Sciatic nerve (tissue), 2 donors: ENCODE measurements at regions of chr17 and their contacts with region 1.

Region 1: GRCh38 chr17:82767041-82767754 is 15.3 kb downstream of the TBCD start:
- DNase-seq: no peak
- ATAC-seq: peak; percentile 49

Region 2: DNA sequence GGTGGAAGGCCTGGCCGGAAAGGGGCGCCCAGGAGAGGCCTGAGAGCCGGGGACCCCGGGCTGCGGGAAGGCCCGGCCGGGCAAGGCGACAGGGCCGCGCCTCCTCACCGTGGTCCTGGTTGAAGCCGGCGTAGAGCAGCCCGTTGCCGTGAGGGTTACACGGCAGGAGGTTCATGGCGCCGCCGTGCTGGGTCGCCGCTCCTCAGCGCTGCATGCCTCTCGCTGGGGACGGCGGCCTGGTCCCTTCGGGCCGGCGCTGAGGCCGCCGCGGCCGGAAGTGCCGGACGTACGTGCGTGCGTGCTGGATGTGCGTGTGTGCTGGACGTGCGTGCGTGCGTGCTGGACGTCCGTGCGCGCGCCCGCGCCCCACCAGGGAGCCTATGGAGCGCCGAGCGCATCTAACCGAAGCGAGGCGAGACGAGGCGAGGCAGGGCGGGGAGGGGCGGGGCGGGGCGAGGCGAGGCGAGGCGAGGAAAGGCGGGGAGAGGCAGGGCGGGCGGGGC is 119.0 kb before region 1 on chr17 and contains the start of gene WDR45B:
- intact Hi-C with region 1: no loop called
- DNase-seq: peak; percentile 96
- ATAC-seq: peak; percentile 96
- total RNA-seq, gene WDR45B: 67.1 TPM

Region 3: GRCh38 chr17:82664701-82665182 is 102.5 kb before region 1 on chr17:
- intact Hi-C with region 1: loop called (anchors 5 kb)
- DNase-seq: no peak
- ATAC-seq: no peak

Region 4: GRCh38 chr17:82698065-82698973 is 68.9 kb before region 1 on chr17 and contains the start of gene RAB40B:
- intact Hi-C with region 1: no loop called
- DNase-seq: peak; percentile 99
- ATAC-seq: peak; percentile 99
- total RNA-seq, gene RAB40B: 30.3 TPM

Region 5: DNA sequence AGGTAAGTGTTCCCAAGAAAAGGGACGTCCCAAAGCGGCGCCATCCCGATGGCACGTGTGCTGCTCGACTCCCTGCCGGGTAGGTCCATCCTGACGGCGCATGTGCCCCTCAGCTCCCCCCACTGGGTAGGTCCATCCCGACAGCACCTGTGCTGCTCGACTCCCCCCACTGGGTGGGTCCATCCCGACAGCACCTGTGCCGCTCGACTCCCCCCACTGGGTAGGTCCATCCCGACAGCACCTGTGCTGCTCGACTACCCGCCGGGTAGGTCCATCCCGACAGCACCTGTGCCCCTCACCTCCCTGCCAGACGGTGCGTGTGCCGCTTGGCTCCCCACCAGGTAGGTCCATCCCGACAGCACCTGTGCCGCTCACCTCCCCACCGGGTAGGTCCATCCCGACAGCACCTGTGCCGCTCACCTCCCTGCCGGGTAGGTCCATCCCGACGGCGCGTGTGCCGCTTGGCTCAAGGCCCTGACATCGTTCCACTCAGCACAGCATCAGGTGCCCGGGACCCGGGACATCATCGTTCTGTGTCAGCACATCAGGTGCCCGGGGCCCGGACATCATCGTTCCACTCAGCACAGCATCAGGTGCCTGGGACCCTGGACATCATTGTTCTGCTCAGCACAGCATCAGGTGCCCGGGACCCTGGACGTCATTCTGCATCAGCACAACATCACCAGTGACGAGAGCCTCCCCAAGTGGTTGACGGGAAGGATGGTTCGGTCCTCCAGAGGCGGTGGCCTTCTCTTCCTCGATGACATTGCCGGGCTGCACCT is 37.5 kb before region 1 on chr17:
- intact Hi-C with region 1: no loop called
- DNase-seq: no peak
- ATAC-seq: peak; percentile 18

Region 6: GRCh38 chr17:82740906-82741759 is 26.1 kb before region 1 on chr17:
- intact Hi-C with region 1: no loop called
- DNase-seq: no peak
- ATAC-seq: no peak